Panc1 (cell line): ENCODE measurements at regions of chr9 and their contacts with region 1.

Region 1: DNA sequence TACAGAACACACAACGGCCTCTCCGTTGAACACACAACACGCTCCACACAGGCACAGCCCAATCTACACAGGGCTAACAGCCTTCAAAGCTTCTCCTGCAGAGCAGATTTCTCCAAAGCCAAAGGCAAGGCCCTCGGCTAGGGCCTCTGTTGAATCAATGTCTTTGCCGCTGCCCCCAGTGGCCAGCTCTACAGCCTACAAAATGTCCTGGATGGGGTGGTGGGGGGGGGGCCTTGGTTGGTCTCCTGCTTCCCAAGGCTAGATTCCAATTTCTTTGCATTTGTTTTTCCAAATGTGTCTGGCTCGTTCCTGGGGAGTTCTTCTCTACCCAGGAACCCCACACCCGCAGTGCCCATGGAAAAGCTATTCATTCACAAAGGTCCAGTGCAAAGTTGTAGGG is 167.2 kb downstream of the PAX5 start:
- DNase-seq: no peak
- ATAC-seq: peak; percentile 45; the same call in 1 of the 2 replicates
- H3K4me3 ChIP-seq: no peak overlapping the region
- H3K27ac ChIP-seq: no peak overlapping the region
- H3K4me1 ChIP-seq: no peaks in the 10 kb centered on the region; the same call in 1 of the 2 replicates
- H3K27me3 ChIP-seq: peaks cover 7% of the 10 kb centered on the region
- CTCF ChIP-seq: no peak

Region 2: DNA sequence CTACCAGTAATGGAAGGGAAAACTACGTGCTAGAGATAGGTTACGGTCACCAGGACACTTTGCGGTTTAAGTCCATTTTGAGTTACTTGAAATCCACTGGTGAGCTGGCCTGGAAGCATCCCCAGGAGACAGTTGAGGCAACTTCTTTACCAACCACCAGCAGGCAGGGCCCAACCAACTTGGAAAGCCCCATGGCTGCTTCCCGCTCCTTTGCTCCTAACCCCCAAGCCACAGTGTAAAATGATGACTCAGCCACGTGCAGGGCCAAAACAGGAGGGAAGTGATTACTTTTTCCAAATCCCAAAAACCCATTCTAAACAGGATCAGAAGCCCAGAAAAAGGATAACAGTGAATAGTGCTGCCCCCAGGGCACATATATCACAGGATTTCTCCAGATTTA is 79.8 kb after region 1 on chr9:
- CTCF ChIA-PET with region 1: interaction called, 4 read pairs
- POLR2A ChIA-PET with region 1: interaction called, 13 read pairs
- in situ Hi-C with region 1: no loop called
- intact Hi-C with region 1: no loop called
- DNase-seq: no peak
- ATAC-seq: no peak
- H3K4me3 ChIP-seq: no peak overlapping the region
- H3K27ac ChIP-seq: no peak overlapping the region
- H3K4me1 ChIP-seq: no peaks in the 10 kb centered on the region; the same call in 1 of the 2 replicates
- H3K27me3 ChIP-seq: peaks cover 4% of the 10 kb centered on the region; the same call in 1 of the 2 replicates
- CTCF ChIP-seq: no peak

Region 3: DNA sequence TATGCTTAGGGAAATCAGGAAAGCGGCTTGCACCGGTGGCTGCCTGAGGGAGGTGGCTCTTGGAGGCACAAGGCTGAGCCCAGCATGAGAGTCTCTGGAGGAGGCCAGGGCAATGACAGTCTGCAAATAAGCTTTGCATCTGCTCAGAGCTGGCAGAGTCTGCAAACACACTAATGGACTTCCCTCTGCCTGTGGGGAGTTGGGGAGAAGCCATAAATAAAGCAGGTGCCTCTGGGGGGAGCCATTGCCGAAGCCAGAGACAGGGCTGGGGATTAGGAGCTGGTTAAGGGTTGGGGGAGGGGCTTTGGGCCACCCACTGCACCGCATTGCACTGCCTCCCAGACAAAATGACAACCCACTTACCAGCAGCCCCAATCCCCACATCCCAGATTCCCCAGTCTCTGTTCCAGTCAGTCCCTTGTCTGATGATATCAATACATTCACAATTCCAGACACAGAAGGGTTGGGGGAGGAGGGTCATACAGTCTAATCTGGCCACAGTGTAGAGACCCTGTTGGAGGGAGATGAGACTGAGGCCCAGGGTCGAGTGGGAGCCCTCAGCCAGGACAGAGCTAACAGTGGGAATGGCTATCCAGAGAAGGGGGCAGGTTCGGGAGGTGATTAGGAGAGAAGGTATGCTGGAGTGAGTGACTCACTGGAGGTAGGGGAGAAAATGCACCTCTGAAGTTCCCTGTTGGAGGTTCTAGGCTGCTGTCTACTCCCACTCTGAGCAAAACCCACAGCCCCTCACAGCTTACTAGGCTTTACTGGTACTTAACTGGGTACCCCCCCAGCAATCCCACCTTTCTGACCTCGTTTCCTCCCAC is 113.5 kb after region 1 on chr9:
- CTCF ChIA-PET with region 1: interaction called, 35 read pairs
- POLR2A ChIA-PET with region 1: no interaction called
- in situ Hi-C with region 1: no loop called
- intact Hi-C with region 1: loop called (anchors 5 kb)
- DNase-seq: no peak
- ATAC-seq: peak; percentile 80
- H3K4me3 ChIP-seq: no peak overlapping the region
- H3K27ac ChIP-seq: no peak overlapping the region
- H3K4me1 ChIP-seq: peaks cover 4% of the 10 kb centered on the region
- H3K27me3 ChIP-seq: peaks cover 7% of the 10 kb centered on the region
- CTCF ChIP-seq: no peak